CD8-positive, alpha-beta T cell (primary cell): ENCODE measurements at regions of chr10 and their contacts with region 1.

Region 1: DNA sequence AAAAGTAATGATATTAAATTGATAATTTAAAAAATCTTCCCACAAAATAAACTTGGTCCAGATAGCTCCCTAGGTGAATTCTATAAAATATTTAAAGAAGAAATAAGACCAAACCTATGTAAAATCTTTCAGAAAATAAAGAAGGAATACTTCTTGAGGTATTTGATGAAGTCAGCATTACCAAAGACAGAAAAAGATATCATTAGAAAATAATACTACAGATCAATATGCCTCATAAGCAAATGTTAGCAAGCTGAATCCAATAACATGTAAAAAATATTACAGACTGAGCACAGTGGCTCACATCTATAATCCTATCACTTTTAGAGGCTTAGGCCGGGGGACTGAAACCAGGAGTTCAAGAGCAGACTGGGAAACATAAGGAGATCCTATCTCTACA is 30.0 kb downstream of the TMEM26 start:
- DNase-seq: no peak
- ATAC-seq: no peak
- H3K4me3 ChIP-seq: no peak overlapping the region
- H3K4me3 Mint-ChIP-seq: no peak overlapping the region
- H3K27ac ChIP-seq: no peak overlapping the region
- H3K27ac Mint-ChIP-seq: no peak overlapping the region
- H3K4me1 ChIP-seq: no peaks in the 10 kb centered on the region
- H3K4me1 Mint-ChIP-seq: no peaks in the 10 kb centered on the region
- H3K27me3 ChIP-seq: no peaks in the 10 kb centered on the region
- H3K27me3 Mint-ChIP-seq: no peaks in the 10 kb centered on the region
- CTCF ChIP-seq: no peak

Region 2: DNA sequence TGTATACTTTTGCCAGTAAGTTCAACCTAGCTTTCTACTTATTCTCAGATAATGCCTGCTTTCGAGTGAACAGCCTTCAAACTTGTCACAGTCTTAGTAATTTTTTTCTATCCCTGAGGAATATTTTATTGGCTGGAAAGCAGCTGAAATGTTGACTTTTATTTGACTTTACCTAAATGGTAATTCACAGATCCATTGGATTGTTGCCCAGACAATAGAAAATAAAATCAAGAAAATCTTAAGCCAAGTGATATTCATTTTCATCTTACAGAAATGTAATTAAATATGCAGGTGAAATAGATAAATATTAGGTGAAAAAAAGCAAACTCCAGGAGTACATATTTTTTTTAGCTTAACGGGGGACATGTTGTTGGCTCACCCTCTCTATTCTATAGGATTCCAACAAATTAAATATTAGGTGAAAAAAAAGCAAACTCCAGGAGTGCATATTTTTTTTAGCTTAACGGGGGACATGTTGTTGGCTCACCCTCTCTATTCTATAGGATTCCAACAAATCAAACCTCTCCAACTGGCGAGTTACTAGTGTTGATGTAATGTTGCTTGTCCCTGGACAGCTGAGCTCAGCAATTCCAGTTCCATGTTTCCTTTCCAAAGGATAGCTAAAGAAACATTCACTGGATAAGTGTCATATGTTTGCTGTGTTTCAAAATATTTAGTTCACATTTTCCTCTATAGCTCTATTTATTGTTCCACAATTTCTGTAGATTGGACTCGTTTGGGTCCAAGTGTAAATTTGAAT is 25.8 kb after region 1 on chr10:
- CTCF ChIA-PET with region 1: no interaction called
- POLR2A ChIA-PET with region 1: no interaction called
- intact Hi-C with region 1: loop called in 1 of 2 experiments (anchors 2 kb)
- DNase-seq: no peak
- ATAC-seq: no peak
- H3K4me3 ChIP-seq: no peak overlapping the region
- H3K4me3 Mint-ChIP-seq: no peak overlapping the region
- H3K27ac ChIP-seq: no peak overlapping the region
- H3K27ac Mint-ChIP-seq: no peak overlapping the region
- H3K4me1 ChIP-seq: no peaks in the 10 kb centered on the region
- H3K4me1 Mint-ChIP-seq: peaks cover 9% of the 10 kb centered on the region
- H3K27me3 ChIP-seq: peaks cover 0 to 3% of the 10 kb centered on the region in 2 experiments
- H3K27me3 Mint-ChIP-seq: peaks cover 18% of the 10 kb centered on the region
- CTCF ChIP-seq: no peak

Region 3: DNA sequence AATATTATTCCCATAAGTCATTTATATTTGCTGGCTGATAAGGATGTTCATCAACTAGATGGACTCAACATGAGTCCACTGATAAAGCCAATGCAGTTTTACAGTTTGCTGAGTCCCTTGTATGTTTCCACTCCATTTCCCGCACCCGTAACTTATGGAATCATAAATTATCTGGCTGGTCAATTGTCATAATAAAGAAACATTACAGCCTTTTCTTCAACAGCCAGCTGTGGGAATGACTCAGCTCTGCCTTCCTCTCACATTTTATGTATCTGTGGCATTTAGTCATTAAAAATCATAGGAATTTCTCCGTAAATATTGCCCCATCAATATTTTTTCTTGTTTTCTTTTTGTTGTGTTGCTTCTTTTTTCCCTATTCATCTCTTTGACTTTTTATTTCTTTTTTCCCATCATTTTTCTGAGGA is 52.3 kb after region 1 on chr10:
- CTCF ChIA-PET with region 1: no interaction called
- POLR2A ChIA-PET with region 1: no interaction called
- intact Hi-C with region 1: no loop called
- DNase-seq: no peak
- ATAC-seq: no peak
- H3K4me3 ChIP-seq: no peak overlapping the region
- H3K4me3 Mint-ChIP-seq: no peak overlapping the region
- H3K27ac ChIP-seq: no peak overlapping the region
- H3K27ac Mint-ChIP-seq: no peak overlapping the region
- H3K4me1 ChIP-seq: no peaks in the 10 kb centered on the region
- H3K4me1 Mint-ChIP-seq: no peaks in the 10 kb centered on the region
- H3K27me3 ChIP-seq: no peaks in the 10 kb centered on the region
- H3K27me3 Mint-ChIP-seq: no peaks in the 10 kb centered on the region
- CTCF ChIP-seq: no peak

Region 4: GRCh38 chr10:61701055-61701705 is 278.0 kb after region 1 on chr10:
- CTCF ChIA-PET with region 1: no interaction called
- POLR2A ChIA-PET with region 1: no interaction called
- intact Hi-C with region 1: no loop called
- DNase-seq: no peak
- ATAC-seq: no peak
- H3K4me3 ChIP-seq: no peak overlapping the region
- H3K4me3 Mint-ChIP-seq: no peak overlapping the region
- H3K27ac ChIP-seq: no peak overlapping the region
- H3K27ac Mint-ChIP-seq: no peak overlapping the region
- H3K4me1 ChIP-seq: no peaks in the 10 kb centered on the region
- H3K4me1 Mint-ChIP-seq: no peaks in the 10 kb centered on the region
- H3K27me3 ChIP-seq: no peaks in the 10 kb centered on the region
- H3K27me3 Mint-ChIP-seq: no peaks in the 10 kb centered on the region
- CTCF ChIP-seq: no peak

Region 5: DNA sequence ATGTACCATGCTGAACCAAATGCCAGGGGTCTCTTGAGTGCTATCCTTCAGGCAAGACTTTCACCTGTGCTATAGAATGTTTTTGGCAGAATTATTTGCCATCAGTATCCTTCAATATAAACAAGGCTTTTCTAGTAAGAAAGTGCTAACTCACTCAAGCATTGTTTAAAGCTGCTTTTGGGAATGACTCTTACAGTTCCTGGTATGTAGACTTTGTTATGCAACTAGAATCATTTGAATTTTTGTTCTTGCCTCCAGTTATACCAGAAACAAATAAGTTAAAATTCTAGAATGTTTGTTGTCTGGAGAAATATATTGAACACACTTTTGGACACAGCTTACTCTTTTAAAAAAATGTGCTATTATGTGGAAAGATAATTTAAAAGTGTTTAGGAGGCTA is 884.9 kb after region 1 on chr10:
- CTCF ChIA-PET with region 1: no interaction called
- POLR2A ChIA-PET with region 1: no interaction called
- intact Hi-C with region 1: no loop called
- DNase-seq: no peak
- ATAC-seq: no peak
- H3K4me3 ChIP-seq: no peak overlapping the region
- H3K4me3 Mint-ChIP-seq: no peak overlapping the region
- H3K27ac ChIP-seq: no peak overlapping the region
- H3K27ac Mint-ChIP-seq: no peak overlapping the region
- H3K4me1 ChIP-seq: peaks cover 16% of the 10 kb centered on the region
- H3K4me1 Mint-ChIP-seq: peaks cover 23% of the 10 kb centered on the region
- H3K27me3 ChIP-seq: no peaks in the 10 kb centered on the region
- H3K27me3 Mint-ChIP-seq: peaks cover 9% of the 10 kb centered on the region
- CTCF ChIP-seq: no peak